Ascending aorta (tissue), 2 donors: ENCODE measurements at regions of chr9 and their contacts with region 1.

Region 1: DNA sequence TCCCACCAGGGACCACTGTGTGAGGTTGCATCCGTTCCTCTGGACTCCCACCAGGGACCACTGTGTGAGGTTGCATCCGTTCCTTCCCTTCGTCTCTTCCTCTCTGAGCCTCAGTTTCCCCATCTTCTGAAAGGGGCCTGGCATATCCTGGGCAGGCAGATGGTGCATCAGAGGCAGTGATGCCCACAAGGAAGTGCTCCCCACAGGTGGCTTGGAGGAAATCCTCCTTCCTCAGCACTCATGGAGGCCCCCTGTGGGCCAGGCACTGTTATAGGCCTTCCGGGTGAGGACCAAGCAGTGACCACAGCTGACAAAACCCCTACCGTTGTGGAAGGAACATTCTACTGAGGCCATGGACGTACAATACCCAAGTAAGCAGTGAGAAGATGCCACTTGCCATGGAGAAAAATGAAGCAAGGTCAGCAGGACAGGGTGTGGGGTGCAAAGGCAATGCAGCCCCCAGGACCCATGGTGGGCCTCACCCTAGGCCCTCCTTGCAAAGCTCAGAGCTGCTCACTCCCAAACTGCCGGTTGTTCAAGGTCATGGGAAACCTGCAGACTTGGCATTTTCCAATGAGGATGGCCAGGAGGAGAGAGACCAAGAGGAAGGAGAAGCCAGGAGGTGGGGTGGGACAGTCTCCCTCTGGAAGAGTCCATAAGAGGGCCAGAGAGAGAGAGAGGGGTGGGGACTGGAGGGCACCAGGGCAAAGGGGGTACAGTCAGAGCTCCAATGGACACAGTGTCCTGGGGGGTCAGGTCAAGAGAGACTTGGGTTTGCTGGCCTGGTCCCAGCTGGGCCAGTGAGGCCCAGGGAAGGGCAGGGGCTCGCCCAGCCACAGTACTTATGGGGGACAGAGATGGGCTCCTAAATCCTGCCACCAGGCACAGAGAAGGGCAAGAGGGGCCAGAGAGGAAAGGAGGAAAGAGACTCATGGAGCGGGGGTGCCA is 51.1 kb downstream of the C9orf50 start:
- DNase-seq: no peak
- H3K4me3 ChIP-seq: peak overlapping the region in 1 of 2 donors; percentile 66
- H3K27ac ChIP-seq: peak overlapping the region; percentile 78 to 80
- H3K4me1 ChIP-seq: peaks cover 8 to 18% of the 10 kb centered on the region in 2 donors
- H3K27me3 ChIP-seq: no peaks in the 10 kb centered on the region
- CTCF ChIP-seq: peak; percentile 16 to 30 (median 29)

Region 2: GRCh38 chr9:129495534-129496325 is 74.0 kb before region 1 on chr9:
- intact Hi-C with region 1: loop called (anchors 2 kb)
- DNase-seq: peak; percentile 68 to 96
- H3K4me3 ChIP-seq: peak overlapping the region; percentile 68 to 72
- H3K27ac ChIP-seq: peak overlapping the region; percentile 98 to 100
- H3K4me1 ChIP-seq: peaks cover 15 to 62% of the 10 kb centered on the region in 2 donors
- H3K27me3 ChIP-seq: no peaks in the 10 kb centered on the region
- CTCF ChIP-seq: no peak

Region 3: GRCh38 chr9:129550199-129550839 is 19.5 kb before region 1 on chr9:
- intact Hi-C with region 1: loop called (anchors 1 kb)
- DNase-seq: peak in 1 of 2 donors; percentile 93
- H3K4me3 ChIP-seq: peak overlapping the region; percentile 52 to 82
- H3K27ac ChIP-seq: peak overlapping the region; percentile 83 to 94
- H3K4me1 ChIP-seq: peaks cover 17 to 18% of the 10 kb centered on the region in 2 donors
- H3K27me3 ChIP-seq: no peaks in the 10 kb centered on the region
- CTCF ChIP-seq: no peak

Region 4: DNA sequence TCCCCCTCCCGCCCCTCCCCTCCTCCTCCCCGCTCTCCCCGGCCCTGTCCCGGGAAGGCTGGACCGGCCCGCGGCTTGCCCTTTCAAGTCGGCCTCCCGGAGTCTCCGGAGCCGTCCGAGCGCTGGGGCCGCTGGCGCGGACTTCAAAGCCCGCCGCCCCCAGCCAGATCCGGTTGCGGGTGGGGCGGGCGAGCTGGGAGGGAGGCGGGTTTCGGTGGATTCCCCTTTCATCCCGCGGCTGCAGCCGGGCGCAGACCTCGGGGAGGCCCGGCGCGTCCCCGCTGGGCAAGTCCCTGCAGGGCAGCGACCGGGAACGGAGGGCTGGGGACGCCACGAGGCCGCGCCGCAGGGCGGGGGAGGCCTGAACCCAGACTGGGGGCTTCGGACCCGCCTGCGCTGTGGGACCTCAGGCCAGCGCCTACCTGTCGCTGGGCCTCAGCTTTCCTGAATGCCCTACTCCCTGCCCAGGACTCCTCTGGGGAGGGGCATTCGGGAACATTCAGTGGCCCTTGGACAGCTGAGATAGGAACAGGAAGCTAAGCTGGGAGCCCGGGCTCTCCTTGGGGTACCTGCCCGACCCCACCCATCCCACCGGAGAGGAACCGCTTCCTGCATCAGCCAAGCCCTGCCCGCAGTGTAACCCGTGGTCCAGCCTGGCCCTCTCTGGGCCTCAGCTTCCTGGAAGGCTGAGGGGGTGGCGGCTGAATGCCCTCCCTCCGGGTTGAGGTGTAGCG is 27.7 kb after region 1 on chr9:
- intact Hi-C with region 1: loop called (anchors 2 kb)
- DNase-seq: peak in 1 of 2 donors; percentile 82
- H3K4me3 ChIP-seq: peak overlapping the region; percentile 48 to 67
- H3K27ac ChIP-seq: peak overlapping the region; percentile 87 to 88
- H3K4me1 ChIP-seq: peaks cover 3 to 17% of the 10 kb centered on the region in 2 donors
- H3K27me3 ChIP-seq: no peaks in the 10 kb centered on the region
- CTCF ChIP-seq: no peak